ENCODE measurements at regions of chr6 and their contacts with region 1.

Region 1: DNA sequence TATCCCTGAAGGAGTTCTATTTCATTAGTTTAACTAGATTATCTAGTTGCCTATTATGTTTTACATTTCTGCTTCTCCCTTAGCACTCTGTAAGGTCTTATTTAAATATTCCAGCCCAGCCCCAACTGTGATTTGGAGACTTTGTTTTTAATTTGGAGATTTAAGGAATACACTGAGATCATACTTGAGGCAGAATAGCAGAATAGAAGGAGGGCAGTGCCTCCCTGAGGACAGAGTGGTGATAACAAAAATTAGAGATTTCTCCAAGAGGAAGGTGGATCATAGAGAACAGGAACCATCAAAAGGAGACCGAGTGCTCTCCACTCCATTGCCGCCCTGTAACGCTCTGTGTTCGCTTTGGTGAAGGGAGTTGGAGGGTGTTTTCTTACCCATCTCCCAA is 14.8 kb upstream of the CD164 start:
- DNase-seq: no peak
- H3K4me3 ChIP-seq: no peak overlapping the region
- CTCF ChIP-seq: peak; percentile 18

Region 2: GRCh38 chr6:109382576-109383437 is 14.2 kb before region 1 on chr6:
- CTCF ChIA-PET with region 1: interaction called, 38 read pairs
- POLR2A ChIA-PET with region 1: no interaction called
- DNase-seq: peak; percentile 70
- H3K4me3 ChIP-seq: peak overlapping the region; percentile 93
- CTCF ChIP-seq: peak; percentile 9

Region 3: GRCh38 chr6:109482905-109483735 is 86.1 kb after region 1 on chr6 and contains the start of gene ZBTB24:
- CTCF ChIA-PET with region 1: no interaction called
- POLR2A ChIA-PET with region 1: no interaction called
- DNase-seq: peak; percentile 26
- H3K4me3 ChIP-seq: peak within 1 kb of the TSS; percentile 57
- CTCF ChIP-seq: no peak

Measured in AG04449 (cell line).